Astrocyte of the cerebellum (primary cell): ENCODE measurements at regions of chr6 and their contacts with region 1.

Region 1: DNA sequence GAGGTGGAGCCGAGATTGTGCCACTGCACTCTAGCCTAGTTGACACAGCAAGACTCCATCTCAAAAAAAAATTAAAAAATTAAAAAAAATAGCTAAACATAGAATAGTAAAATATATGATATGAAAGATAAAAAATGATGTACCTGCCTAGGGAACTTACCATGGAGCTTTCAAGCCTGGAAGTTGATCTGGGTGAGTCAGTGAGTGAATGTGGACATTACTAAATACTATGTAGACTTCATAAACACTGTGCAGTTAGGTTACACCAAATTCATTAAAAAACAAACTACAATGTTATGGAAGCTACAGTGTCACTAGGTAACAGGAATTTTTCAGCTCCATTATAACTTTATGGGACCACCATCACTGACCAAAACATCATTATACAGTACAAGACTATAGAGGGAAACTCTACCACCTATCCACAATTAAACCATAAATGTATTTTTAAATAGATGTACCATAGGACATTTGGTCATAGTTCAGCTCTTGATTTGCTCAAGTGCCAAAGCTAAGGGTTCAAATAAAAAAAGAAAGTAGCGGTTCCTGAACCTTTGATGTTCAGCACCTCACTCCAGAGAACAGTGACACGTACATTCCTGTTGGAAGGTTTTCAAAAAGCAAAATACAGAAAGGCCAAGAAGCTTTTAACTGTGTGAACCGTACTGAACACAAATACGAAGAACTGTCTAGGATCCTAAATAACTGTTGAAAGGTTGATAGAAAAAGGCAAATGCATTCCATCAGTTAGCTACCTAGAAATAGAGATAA is 52.4 kb upstream of the SPDEF start:
- DNase-seq: no peak
- H3K4me3 ChIP-seq: no peak overlapping the region
- CTCF ChIP-seq: no peak

Region 2: DNA sequence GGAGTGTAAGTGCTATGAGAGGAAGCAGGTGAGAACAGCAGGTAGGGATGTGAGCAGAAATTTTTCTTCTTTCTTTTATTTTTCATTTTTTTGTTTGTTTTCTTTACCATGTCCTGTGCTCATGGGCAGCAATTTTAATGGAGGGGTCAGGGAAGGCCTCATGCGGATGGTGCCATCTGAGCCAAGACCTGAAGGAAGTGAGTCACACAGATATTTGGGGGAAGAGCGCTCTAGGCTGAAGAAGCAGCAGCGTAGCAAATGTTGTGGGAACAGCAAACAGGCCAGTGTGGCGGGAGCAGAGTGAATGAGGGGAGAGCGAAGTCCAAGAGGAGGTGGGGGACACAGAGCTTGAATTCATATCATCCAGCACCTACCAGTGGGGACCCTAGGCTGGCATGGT is 65.1 kb before region 1 on chr6:
- in situ Hi-C with region 1: loop called (anchors 5 kb)
- DNase-seq: peak; percentile 26
- H3K4me3 ChIP-seq: no peak overlapping the region
- CTCF ChIP-seq: no peak

Region 3: DNA sequence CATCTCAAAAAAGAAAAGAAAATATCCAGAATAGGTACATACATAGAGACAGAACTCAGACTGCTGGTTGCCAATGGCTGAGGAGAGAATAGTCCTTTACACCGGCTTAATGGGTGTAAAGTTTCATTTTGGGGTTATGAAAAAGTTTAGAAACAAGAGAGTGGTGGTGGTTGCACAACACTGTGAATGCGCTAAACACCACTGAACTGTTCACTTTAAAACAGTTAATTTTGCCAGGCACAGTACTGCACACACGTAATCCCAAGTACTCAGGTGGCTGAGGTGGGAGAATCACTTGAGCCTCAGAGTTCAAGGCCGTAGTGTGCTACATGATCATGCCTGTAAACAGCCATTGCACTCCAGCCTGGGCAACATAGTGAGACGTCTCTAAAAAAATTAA is 80.5 kb after region 1 on chr6:
- in situ Hi-C with region 1: no loop called
- DNase-seq: no peak
- H3K4me3 ChIP-seq: no peak overlapping the region
- CTCF ChIP-seq: no peak